Right lobe of liver (tissue), 6 donors: ENCODE measurements at regions of chr15 and their contacts with region 1.

Region 1: DNA sequence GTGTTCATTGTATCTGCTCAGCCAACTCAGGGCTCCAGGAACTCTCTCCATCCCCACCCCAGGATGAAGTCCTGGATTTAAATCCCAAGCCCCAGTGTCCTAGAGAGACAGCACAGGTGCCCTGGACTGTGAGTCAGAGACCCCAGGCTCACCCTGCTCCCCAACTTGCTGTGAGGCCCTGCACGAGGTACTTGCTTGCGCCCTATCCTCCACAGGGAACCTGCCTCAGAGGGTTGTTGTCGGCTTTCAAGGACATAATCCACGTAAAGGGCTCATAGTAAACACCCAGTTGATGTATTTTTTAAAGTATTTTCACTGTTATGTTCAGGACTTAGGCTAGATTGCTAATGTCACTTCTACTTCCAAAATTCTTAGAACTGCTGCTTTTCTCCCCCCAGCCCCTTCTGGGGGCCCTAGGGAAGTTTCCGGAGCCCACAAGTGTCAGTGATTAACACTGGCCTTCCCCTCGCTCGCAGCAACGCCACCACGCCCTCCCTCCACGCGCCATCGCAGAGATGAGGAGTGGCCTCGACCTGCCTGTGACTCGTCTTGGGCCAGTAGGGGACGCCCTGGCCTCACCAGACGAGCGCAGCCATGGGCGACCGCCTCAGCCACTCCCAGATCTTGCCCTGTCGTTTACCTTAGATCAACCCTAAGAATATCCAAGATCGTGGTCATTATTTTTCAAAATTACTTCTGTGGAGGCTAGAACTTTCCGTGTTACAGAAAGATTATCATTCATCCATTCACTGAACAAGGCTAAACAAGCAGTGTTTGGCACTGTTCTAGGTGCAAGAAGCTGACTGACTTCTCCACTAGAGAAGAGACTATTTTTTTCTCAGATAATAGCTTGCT is 6.0 kb upstream of the SRP14 start:
- DNase-seq: peak; percentile 81 to 87 (median 87)
- ATAC-seq: peak; percentile 73 to 84 (median 78)
- H3K4me3 ChIP-seq: no peak overlapping the region
- H3K27ac ChIP-seq: peak overlapping the region in 1 of 3 donors; percentile 18
- H3K4me1 ChIP-seq: peaks cover 0 to 23% (median 8%) of the 10 kb centered on the region in 4 donors
- H3K27me3 ChIP-seq: no peaks in the 10 kb centered on the region
- CTCF ChIP-seq: peak; percentile 88 to 95 (median 90)
- POLR2A ChIP-seq: no peak

Region 2: GRCh38 chr15:39987821-39988220 is 57.1 kb before region 1 on chr15:
- intact Hi-C with region 1: no loop called
- DNase-seq: no peak
- ATAC-seq: no peak
- H3K4me3 ChIP-seq: no peak overlapping the region
- H3K27ac ChIP-seq: no peak overlapping the region
- H3K4me1 ChIP-seq: no peaks in the 10 kb centered on the region
- H3K27me3 ChIP-seq: no peaks in the 10 kb centered on the region
- CTCF ChIP-seq: no peak
- POLR2A ChIP-seq: no peak

Region 3: DNA sequence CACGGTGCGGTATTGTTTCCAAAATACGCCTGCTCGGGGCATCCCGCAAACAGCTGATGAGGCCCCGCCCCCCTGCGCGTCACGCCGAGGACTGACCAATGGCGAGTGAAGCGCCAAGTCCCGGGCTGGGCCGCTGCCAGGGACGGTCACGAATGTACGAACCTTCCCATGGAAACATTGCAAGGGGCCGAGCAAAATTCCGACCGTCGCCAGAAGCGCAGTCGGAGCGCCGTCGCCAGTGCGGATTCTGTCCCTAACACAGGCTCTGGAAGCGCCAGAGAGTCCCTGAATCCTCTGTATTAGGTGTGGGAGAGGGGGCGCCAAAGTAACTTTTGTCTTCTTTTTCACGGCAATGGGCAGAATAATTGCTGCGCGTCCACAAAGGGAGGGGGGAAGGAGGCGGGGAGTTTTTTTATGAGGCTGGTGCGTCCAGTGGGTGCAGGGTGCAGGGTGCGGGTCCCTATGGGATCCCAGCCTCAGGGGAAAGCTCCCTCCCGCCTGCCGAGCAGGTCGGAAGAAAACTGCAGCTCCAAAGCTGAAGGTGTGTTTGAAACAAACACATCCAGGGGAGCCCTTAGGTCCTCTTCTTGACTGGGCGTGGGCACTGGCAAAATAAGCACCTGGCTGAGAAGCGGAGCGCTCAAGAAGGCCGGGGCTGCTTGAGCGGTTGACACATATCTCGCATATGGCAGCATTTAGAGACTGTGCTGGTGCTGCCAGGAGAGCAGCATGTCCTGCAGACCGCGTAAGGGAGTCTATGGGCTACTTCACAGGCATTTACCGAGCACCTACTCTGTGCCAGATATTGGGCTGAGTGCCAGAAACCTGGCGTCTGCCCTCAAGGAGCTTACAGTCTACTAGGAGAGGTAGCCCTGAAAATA is 64.2 kb after region 1 on chr15 and contains the start of gene BMF:
- intact Hi-C with region 1: loop called (anchors 10 kb)
- DNase-seq: peak; percentile 99 to 100 (median 100)
- ATAC-seq: peak; percentile 78 to 83 (median 80)
- H3K4me3 ChIP-seq: peak within 1 kb of the TSS; percentile 49 to 75 (median 71)
- H3K27ac ChIP-seq: peak within 1 kb of the TSS; percentile 73 to 83 (median 78)
- H3K4me1 ChIP-seq: peaks cover 0 to 42% (median 18%) of the 10 kb centered on the region in 4 donors
- H3K27me3 ChIP-seq: no peaks in the 10 kb centered on the region
- CTCF ChIP-seq: peak in 3 of 4 donors; percentile 21 to 32 (median 24)
- POLR2A ChIP-seq: no peak
- total RNA-seq, gene BMF: 1.7 to 7.3 (median 3.4) TPM

Region 4: DNA sequence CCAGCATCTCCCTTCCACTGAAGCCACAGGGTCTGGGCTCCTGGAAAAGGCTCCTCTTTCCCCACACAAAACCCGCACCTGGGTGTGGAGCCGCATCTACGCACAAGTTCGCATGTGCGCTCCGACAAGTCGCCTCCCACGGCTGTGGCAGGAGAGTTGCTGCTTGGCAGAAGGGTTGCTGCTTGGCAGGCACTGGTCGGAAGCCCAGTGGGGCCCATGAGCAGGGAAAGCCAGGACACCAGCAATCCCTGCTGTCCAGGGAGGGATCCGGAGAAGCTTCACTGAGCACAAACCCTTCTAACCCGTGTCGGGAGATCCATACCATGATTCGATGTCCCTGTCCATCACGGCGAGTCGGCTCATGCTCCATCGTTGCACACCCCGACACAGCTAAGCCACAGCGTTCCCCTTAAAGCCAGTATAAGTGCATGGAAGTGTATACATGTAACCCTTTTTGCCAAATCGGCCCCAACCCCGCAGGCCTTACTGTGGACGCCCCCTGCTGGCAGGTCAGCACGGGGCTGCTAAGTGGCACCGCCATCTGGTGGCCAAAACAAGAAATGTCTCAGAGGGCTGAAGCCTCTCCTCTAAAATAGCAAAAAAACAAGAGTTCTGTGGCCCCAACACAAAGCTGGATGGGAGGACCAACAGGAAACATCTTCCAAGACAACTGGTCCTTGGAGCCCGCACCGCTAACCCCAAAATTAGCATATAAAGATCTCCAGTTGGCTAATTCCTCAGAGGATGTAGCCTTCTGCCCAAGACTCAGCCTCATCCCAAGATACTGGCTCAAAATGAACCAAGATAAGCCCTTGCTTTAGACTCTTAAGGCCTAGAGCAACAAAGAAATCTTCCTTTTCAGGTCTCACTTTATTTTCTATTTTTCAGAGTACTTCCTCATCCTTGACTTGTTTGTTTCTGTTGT is 229.7 kb after region 1 on chr15:
- intact Hi-C with region 1: loop called (anchors 5 to 10 kb)
- DNase-seq: peak; percentile 84 to 85 (median 85)
- ATAC-seq: peak; percentile 77 to 87 (median 81)
- H3K4me3 ChIP-seq: no peak overlapping the region
- H3K27ac ChIP-seq: no peak overlapping the region
- H3K4me1 ChIP-seq: peaks cover 0 to 9% (median 0%) of the 10 kb centered on the region in 4 donors
- H3K27me3 ChIP-seq: no peaks in the 10 kb centered on the region
- CTCF ChIP-seq: peak; percentile 100
- POLR2A ChIP-seq: no peak